Esophagus muscularis mucosa (tissue), 4 donors: ENCODE measurements at regions of chr3 and their contacts with region 1.

Region 1: GRCh38 chr3:58324391-58325390 is 8.0 kb upstream of the PXK start:
- DNase-seq: no peak
- H3K4me3 ChIP-seq: no peak overlapping the region
- H3K27ac ChIP-seq: peak overlapping the region; percentile 11 to 58 (median 48)
- H3K4me1 ChIP-seq: peaks cover 6 to 27% (median 19%) of the 10 kb centered on the region in 4 donors
- H3K27me3 ChIP-seq: no peaks in the 10 kb centered on the region
- CTCF ChIP-seq: no peak
- EP300 ChIP-seq: no peak
- POLR2A ChIP-seq: no peak

Region 2: DNA sequence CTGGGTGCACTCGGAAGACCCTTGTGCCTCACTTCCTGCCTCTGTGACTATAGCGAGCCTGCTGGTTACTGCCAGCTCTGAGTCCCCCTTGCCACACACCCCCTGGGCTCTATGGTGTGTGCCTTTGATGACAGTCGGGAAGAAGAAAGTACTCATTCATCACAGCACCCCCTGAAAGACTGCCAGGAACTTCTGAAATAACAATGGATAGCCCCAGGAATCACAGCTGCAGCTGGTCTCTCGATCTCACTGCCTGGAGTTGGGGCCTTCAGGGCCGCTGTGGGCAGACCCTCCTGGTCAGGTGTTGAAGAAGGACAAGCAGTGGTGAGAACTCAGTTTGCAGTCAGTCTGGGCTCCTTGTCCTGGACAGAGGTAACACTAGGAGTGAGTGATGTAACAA is 28.4 kb before region 1 on chr3:
- intact Hi-C with region 1: no loop called
- DNase-seq: no peak
- H3K4me3 ChIP-seq: no peak overlapping the region
- H3K27ac ChIP-seq: no peak overlapping the region
- H3K4me1 ChIP-seq: peaks cover 0 to 11% (median 1%) of the 10 kb centered on the region in 4 donors
- H3K27me3 ChIP-seq: peaks cover 0 to 8% (median 0%) of the 10 kb centered on the region in 4 donors
- CTCF ChIP-seq: no peak
- EP300 ChIP-seq: no peak
- POLR2A ChIP-seq: no peak

Region 3: GRCh38 chr3:58414538-58415197 is 90.0 kb after region 1 on chr3:
- intact Hi-C with region 1: loop called (anchors 5 kb)
- DNase-seq: no peak
- H3K4me3 ChIP-seq: no peak overlapping the region
- H3K27ac ChIP-seq: peak overlapping the region in 1 of 4 donors; percentile 51
- H3K4me1 ChIP-seq: peaks cover 17 to 21% (median 20%) of the 10 kb centered on the region in 4 donors
- H3K27me3 ChIP-seq: no peaks in the 10 kb centered on the region
- CTCF ChIP-seq: peak; percentile 81 to 85 (median 83)
- EP300 ChIP-seq: no peak
- POLR2A ChIP-seq: no peak

Region 4: GRCh38 chr3:58532794-58533220 is 208.1 kb after region 1 on chr3:
- intact Hi-C with region 1: loop called (anchors 5 kb)
- DNase-seq: no peak
- H3K4me3 ChIP-seq: no peak overlapping the region
- H3K27ac ChIP-seq: no peak overlapping the region
- H3K4me1 ChIP-seq: peaks cover 29 to 59% (median 42%) of the 10 kb centered on the region in 4 donors
- H3K27me3 ChIP-seq: no peaks in the 10 kb centered on the region
- CTCF ChIP-seq: peak; percentile 85 to 97 (median 88)
- EP300 ChIP-seq: no peak
- POLR2A ChIP-seq: no peak

Region 5: DNA sequence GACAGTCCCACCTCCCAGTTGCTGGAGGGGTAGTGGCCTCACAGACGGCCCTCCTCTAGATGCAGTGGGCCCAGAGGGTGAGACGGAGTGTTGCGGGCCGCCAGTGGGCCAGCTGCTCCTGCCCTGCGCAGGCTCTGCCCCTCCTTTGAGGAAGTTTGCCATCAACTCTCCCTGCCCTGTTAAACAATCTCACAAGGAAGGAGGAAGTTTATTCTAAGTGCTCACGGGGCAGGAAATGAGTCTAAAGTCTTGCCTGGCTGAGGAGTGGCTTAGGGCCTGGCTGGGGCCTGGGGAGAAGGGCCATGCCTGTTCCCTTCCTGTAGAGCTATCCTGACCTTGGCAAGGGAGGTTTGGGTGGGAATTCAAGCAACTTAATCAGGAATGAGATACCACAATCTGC is 342.0 kb after region 1 on chr3 and contains the start of gene FAM3D:
- intact Hi-C with region 1: no loop called
- DNase-seq: no peak
- H3K4me3 ChIP-seq: no peak within 1 kb of the TSS
- H3K27ac ChIP-seq: peak within 1 kb of the TSS in 1 of 4 donors; percentile 3
- H3K4me1 ChIP-seq: peaks cover 0 to 4% (median 0%) of the 10 kb centered on the region in 4 donors
- H3K27me3 ChIP-seq: peaks cover 0 to 6% (median 0%) of the 10 kb centered on the region in 4 donors
- CTCF ChIP-seq: no peak
- EP300 ChIP-seq: no peak
- POLR2A ChIP-seq: no peak
- total RNA-seq, gene FAM3D: not detected